ENCODE measurements at regions of chr2 and their contacts with region 1.

Region 1: GRCh38 chr2:12918835-12919445 is 202.2 kb downstream of the TRIB2 start:
- DNase-seq: no peak

Region 2: DNA sequence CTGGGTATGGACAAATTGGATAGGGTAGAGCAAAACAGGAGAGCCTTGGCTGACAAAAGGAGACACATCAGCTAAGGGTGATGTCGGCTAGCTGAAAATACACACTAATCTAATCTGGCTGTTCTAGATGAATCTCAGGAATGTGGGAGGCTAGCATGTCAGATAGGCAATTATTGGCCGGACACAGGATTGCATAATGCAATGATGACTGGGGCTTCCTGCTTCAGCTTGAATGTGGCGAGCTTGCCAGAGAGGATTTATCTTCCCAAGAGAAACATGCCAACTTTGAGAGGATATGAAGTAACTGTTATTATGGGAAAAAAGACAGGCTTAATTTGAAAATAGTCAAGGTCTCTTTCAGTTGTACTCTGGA is 99.9 kb before region 1 on chr2:
- intact Hi-C with region 1: loop called (anchors 1 kb)
- DNase-seq: peak; percentile 82

Region 3: GRCh38 chr2:12847694-12848575 is 71.0 kb before region 1 on chr2:
- intact Hi-C with region 1: loop called (anchors 5 kb)
- DNase-seq: no peak

Measured in cardiac septum (tissue), 1 donor.